GM10248 (cell line): ENCODE measurements at regions of chr1 and their contacts with region 1.

Region 1: GRCh38 chr1:178749581-178750166 is 24.6 kb downstream of the RALGPS2 start:
- DNase-seq: no peak
- CTCF ChIP-seq: no peak

Region 2: GRCh38 chr1:178532392-178532791 is 217.3 kb before region 1 on chr1:
- CTCF ChIA-PET with region 1: interaction called, 118 read pairs
- POLR2A ChIA-PET with region 1: no interaction called
- DNase-seq: peak; percentile 84
- CTCF ChIP-seq: peak; percentile 95

Region 3: GRCh38 chr1:178716111-178716510 is 33.6 kb before region 1 on chr1:
- CTCF ChIA-PET with region 1: no interaction called
- POLR2A ChIA-PET with region 1: no interaction called
- DNase-seq: no peak
- CTCF ChIP-seq: no peak

Region 4: DNA sequence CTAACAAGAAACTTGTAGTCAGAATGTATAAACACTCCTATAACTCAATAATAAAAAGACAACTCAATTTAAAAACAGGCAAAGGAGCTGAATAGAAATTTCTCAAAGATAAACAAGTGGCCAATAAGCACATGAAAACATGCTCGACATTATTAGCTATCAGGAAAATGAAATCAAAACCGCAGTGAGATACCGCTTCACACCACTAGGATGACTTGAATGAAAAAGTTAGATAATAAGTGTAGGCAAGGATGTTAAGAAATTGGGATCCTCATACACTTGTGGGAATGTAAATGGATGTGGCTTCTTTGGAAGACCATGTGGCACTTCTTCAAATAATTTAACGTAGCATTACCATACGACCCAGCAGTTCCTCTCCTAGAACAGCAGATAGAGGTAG is 15.7 kb before region 1 on chr1:
- CTCF ChIA-PET with region 1: interaction called, 11 read pairs
- POLR2A ChIA-PET with region 1: no interaction called
- DNase-seq: no peak
- CTCF ChIP-seq: no peak

Region 5: DNA sequence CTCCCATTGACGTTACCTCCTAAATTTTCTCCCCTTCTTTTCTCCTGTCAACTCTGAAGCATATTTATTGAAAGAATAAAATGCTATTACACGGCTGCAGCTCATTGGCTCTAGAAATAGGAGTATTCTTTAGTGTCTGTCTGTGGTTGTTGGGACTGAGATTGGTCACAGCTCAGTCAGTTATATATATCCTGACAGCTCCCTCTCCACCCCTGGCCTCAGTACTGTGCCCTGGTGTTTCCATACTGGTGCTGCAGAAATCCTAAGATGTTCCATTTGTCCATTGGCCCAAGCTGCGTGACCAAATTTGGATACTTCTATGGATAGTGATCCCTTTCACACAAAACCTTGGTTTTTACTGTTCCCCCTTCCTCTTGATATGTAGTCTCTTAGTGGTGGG is 42.7 kb after region 1 on chr1:
- CTCF ChIA-PET with region 1: no interaction called
- POLR2A ChIA-PET with region 1: no interaction called
- DNase-seq: no peak
- CTCF ChIP-seq: no peak

Region 6: GRCh38 chr1:178898401-178898800 is 148.7 kb after region 1 on chr1:
- CTCF ChIA-PET with region 1: no interaction called
- POLR2A ChIA-PET with region 1: no interaction called
- DNase-seq: no peak
- CTCF ChIP-seq: no peak